Endothelial cell of umbilical vein (primary cell): ENCODE measurements at regions of chr1 and their contacts with region 1.

Region 1: GRCh38 chr1:70205434-70206118 is at the start of gene LRRC40:
- DNase-seq: peak; percentile 99
- H3K4me3 ChIP-seq: peak within 1 kb of the TSS; percentile 63 to 96 (median 79)
- H3K27ac ChIP-seq: peak within 1 kb of the TSS; percentile 89
- H3K4me1 ChIP-seq: peaks cover 32% of the 10 kb centered on the region
- H3K27me3 ChIP-seq: no peaks in the 10 kb centered on the region
- CTCF ChIP-seq: no peak
- POLR2A ChIP-seq: peak; percentile 77
- total RNA-seq, gene LRRC40: 20.6 and 21.1 TPM in 2 replicates

Region 2: DNA sequence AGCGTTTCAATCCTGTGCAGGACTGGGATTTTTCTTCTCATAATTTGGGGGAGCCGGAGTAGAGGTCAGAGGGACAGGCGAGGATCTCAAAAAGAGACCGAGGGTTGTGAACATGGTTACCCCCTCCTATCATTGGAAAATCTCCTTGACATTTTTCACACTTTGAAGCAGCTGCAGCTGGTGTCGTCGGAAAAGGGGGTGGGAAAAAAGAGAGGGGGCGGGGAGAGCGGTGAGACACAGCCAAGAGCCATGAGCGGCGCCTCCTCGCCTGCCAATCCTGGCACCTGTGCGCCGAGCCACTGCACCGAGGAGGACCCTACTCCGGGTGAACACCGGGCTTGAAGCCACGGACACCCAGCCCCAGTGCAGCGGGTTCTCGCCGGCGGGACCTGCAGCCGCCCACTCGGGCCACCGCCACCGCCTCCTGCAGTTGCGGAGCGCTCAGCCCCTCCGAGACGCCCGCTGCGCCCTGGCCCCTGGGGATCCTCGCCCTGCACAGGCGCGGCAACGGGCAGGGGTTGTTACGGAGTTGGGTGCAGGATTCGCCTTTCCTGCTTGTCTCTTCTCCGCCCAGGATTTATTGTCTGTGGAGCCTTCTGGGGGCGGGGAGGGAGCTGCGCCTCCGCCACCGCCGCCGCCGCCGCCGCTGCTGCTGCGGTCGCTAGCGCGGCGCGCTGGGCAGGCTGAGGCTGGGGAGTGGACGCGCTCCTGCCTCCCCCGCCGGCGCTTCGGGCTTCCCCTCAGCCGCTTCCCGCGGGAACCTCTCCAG is 637.7 kb before region 1 on chr1 and contains the start of gene LRRC7:
- CTCF ChIA-PET with region 1: no interaction called
- POLR2A ChIA-PET with region 1: no interaction called
- dilution Hi-C with region 1: no loop called
- intact Hi-C with region 1: loop called (anchors 10 kb)
- DNase-seq: peak; percentile 34
- H3K4me3 ChIP-seq: peak within 1 kb of the TSS; percentile 46 to 58 (median 51)
- H3K27ac ChIP-seq: no peak within 1 kb of the TSS
- H3K4me1 ChIP-seq: peaks cover 14% of the 10 kb centered on the region
- H3K27me3 ChIP-seq: peaks cover 23 to 24% of the 10 kb centered on the region in 2 experiments
- CTCF ChIP-seq: no peak
- POLR2A ChIP-seq: no peak
- total RNA-seq, gene LRRC7: 0.11 and 0.18 TPM in 2 replicates

Region 3: DNA sequence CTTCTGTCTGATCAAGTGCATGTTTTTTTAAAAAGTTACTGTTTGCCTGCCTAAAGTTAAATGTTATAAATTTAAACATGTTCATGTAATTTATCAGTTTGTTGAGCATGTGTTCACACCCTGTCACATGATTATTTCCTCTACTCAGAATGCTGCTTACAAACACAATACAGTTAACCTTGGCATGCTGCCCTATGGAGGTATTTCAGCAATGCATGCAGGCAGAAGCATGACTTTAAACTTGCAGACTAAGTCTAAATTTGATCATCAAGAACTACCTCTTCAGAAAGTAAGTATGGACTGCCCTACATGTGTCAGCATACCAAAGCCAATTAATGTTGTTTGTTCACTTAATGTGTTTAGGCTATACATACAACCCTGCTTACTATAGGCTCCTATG is 161.8 kb before region 1 on chr1:
- CTCF ChIA-PET with region 1: no interaction called
- POLR2A ChIA-PET with region 1: no interaction called
- dilution Hi-C with region 1: no loop called
- intact Hi-C with region 1: loop called (anchors 5 kb)
- DNase-seq: peak; percentile 84
- H3K4me3 ChIP-seq: no peak overlapping the region
- H3K27ac ChIP-seq: peak overlapping the region; percentile 77
- H3K4me1 ChIP-seq: peaks cover 20% of the 10 kb centered on the region
- H3K27me3 ChIP-seq: no peaks in the 10 kb centered on the region
- CTCF ChIP-seq: no peak
- POLR2A ChIP-seq: no peak

Region 4: DNA sequence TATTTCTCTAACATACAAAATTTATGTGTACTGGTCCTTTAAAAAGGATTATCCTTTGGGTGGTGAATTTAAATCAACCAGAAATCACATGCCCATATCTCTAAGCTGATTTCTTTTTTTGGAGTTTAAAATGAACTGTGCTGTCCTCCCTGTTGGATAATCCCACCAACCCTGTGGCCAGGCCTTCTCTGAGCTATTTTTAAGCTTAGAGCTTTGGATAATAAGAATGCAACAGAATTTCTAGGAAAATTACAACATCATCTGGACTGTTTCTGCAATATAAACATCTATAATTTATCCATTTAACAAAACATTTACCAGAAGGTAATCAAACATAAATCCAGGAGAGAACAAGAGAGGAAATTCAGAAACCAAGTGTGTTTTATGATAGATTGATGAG is 88.5 kb before region 1 on chr1:
- CTCF ChIA-PET with region 1: no interaction called
- POLR2A ChIA-PET with region 1: no interaction called
- dilution Hi-C with region 1: no loop called
- intact Hi-C with region 1: no loop called
- DNase-seq: no peak
- H3K4me3 ChIP-seq: no peak overlapping the region
- H3K27ac ChIP-seq: no peak overlapping the region
- H3K4me1 ChIP-seq: no peaks in the 10 kb centered on the region
- H3K27me3 ChIP-seq: no peaks in the 10 kb centered on the region
- CTCF ChIP-seq: no peak
- POLR2A ChIP-seq: no peak

Region 5: GRCh38 chr1:70354332-70355110 is 148.9 kb after region 1 on chr1 and contains the start of gene ANKRD13C:
- CTCF ChIA-PET with region 1: no interaction called
- POLR2A ChIA-PET with region 1: no interaction called
- dilution Hi-C with region 1: no loop called
- intact Hi-C with region 1: loop called (anchors 2 kb)
- DNase-seq: peak; percentile 97
- H3K4me3 ChIP-seq: peak within 1 kb of the TSS; percentile 61 to 83 (median 83)
- H3K27ac ChIP-seq: peak within 1 kb of the TSS; percentile 83
- H3K4me1 ChIP-seq: peaks cover 11% of the 10 kb centered on the region
- H3K27me3 ChIP-seq: no peaks in the 10 kb centered on the region
- CTCF ChIP-seq: peak in 1 of 2 donors; percentile 16
- POLR2A ChIP-seq: peak; percentile 84
- total RNA-seq, gene ANKRD13C: 17.3 and 17.6 TPM in 2 replicates

Region 6: GRCh38 chr1:71080739-71081696 is 875.4 kb after region 1 on chr1 and contains the start of gene ZRANB2:
- CTCF ChIA-PET with region 1: no interaction called
- POLR2A ChIA-PET with region 1: interaction called, 3 read pairs
- dilution Hi-C with region 1: no loop called
- intact Hi-C with region 1: loop called (anchors 1 kb)
- DNase-seq: peak; percentile 94
- H3K4me3 ChIP-seq: peak within 1 kb of the TSS; percentile 59 to 100 (median 95)
- H3K27ac ChIP-seq: peak within 1 kb of the TSS; percentile 96
- H3K4me1 ChIP-seq: peaks cover 18% of the 10 kb centered on the region
- H3K27me3 ChIP-seq: no peaks in the 10 kb centered on the region
- CTCF ChIP-seq: peak; percentile 73 to 78
- POLR2A ChIP-seq: peak; percentile 88
- total RNA-seq, gene ZRANB2: 77.9 and 84.1 TPM in 2 replicates